ENCODE measurements at regions of chr7 and their contacts with region 1.

Region 1: GRCh38 chr7:141072548-141073172 is 1.2 kb upstream of the TMEM178B start:
- ATAC-seq: peak; percentile 60 to 74 (median 66)
- H3K4me3 ChIP-seq: peak overlapping the region; percentile 49 to 86 (median 71)
- H3K27ac ChIP-seq: peak overlapping the region; percentile 77 to 92
- H3K4me1 ChIP-seq: peaks cover 12 to 15% of the 10 kb centered on the region in 2 donors

Region 2: GRCh38 chr7:141272417-141272816 is 199.8 kb after region 1 on chr7:
- in situ Hi-C with region 1: no loop called
- ATAC-seq: peak in 2 of 8 experiments; percentile 31 to 57
- H3K4me3 ChIP-seq: no peak overlapping the region
- H3K27ac ChIP-seq: no peak overlapping the region
- H3K4me1 ChIP-seq: peaks cover 0 to 3% of the 10 kb centered on the region in 2 donors

Region 3: GRCh38 chr7:141511676-141512396 is 439.2 kb after region 1 on chr7:
- in situ Hi-C with region 1: loop called in 1 of 9 experiments (anchors 25 kb)
- ATAC-seq: peak; percentile 60 to 91 (median 83)
- H3K4me3 ChIP-seq: peak overlapping the region in 2 of 5 donors; percentile 5 to 6
- H3K27ac ChIP-seq: no peak overlapping the region
- H3K4me1 ChIP-seq: peaks cover 0 to 2% of the 10 kb centered on the region in 2 donors

Measured in motor neuron (in vitro differentiated cells).